H1 (cell line): ENCODE measurements at regions of chr20 and their contacts with region 1.

Region 1: DNA sequence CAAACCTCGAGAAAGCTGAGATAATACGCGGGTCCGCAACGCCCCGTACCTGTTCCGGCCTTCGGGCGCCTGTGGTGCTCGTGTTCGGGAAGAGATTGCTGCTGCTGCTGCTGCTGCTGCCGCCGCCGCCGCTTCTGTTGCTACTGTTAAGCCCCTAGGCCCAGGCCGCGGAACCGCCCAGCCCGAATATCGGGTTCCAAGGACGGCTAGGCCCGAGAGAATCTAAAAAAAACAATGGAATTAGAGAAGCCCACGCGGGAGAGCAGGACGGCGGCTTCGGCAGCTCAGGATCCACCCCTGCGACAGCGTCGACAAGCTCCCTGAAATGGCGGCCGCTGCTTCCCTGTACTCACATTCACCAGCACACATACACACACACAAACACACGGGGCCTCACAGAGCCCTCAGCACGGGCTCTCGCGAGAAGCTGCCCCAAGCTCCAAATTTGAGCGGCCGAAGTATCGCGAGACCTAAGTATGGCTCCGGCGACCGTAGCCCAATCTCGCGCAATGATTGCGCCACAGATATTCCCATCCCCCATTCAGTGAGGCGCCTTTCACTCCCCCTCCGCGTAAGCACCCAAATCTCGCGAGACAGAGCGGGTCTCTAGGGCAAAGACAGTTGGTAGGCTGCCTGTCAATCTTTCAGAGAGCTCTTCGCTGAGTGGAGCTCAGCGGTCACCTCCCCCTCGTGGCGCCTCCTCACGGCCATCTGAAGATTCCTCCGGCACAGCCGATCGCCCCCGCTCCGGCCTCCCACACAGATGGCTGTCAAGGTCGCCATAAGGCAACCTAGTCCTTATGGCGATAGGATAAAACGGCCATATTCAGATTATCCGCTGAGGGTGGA is at the start of gene RBM39:
- DNase-seq: peak; percentile 98 to 100
- H3K4me3 ChIP-seq: peak within 1 kb of the TSS; percentile 83 to 96 (median 90)
- H3K27ac ChIP-seq: peak within 1 kb of the TSS; percentile 98
- H3K4me1 ChIP-seq: peaks cover 0 to 4% (median 4%) of the 10 kb centered on the region in 4 experiments; a peak in 3 of 7 replicates
- H3K27me3 ChIP-seq: no peaks in the 10 kb centered on the region
- CTCF ChIP-seq: peak in 2 of 3 experiments; percentile 24 to 37; a peak in 3 of 4 replicates
- EP300 ChIP-seq: peak in 1 of 2 experiments; percentile 57; a peak in 1 of 3 replicates
- POLR2A ChIP-seq: peak; percentile 97 to 99
- RAD21 ChIP-seq: peak in 1 of 2 experiments; percentile 22; a peak in 1 of 4 replicates
- total RNA-seq, gene RBM39: 219 and 220 TPM in 2 replicates

Region 2: GRCh38 chr20:35454881-35455609 is 287.1 kb before region 1 on chr20 and contains the start of gene CEP250:
- CTCF ChIA-PET with region 1: no interaction called
- POLR2A ChIA-PET with region 1: interaction called, 10 read pairs
- DNase-seq: peak; percentile 96
- H3K4me3 ChIP-seq: peak within 1 kb of the TSS; percentile 79 to 98 (median 90)
- H3K27ac ChIP-seq: peak within 1 kb of the TSS; percentile 98
- H3K4me1 ChIP-seq: peaks cover 2 to 6% (median 5%) of the 10 kb centered on the region in 4 experiments; a peak in 2 of 7 replicates
- H3K27me3 ChIP-seq: no peaks in the 10 kb centered on the region
- CTCF ChIP-seq: no peak
- EP300 ChIP-seq: no peak
- POLR2A ChIP-seq: peak; percentile 65 to 87
- RAD21 ChIP-seq: no peak
- total RNA-seq, gene CEP250: 33.1 and 33.7 TPM in 2 replicates

Region 3: GRCh38 chr20:35582741-35583404 is 159.2 kb before region 1 on chr20:
- CTCF ChIA-PET with region 1: no interaction called
- POLR2A ChIA-PET with region 1: no interaction called
- DNase-seq: no peak
- H3K4me3 ChIP-seq: no peak overlapping the region
- H3K27ac ChIP-seq: no peak overlapping the region
- H3K4me1 ChIP-seq: no peaks in the 10 kb centered on the region
- H3K27me3 ChIP-seq: no peaks in the 10 kb centered on the region
- CTCF ChIP-seq: no peak
- EP300 ChIP-seq: no peak
- POLR2A ChIP-seq: no peak
- RAD21 ChIP-seq: no peak

Region 4: DNA sequence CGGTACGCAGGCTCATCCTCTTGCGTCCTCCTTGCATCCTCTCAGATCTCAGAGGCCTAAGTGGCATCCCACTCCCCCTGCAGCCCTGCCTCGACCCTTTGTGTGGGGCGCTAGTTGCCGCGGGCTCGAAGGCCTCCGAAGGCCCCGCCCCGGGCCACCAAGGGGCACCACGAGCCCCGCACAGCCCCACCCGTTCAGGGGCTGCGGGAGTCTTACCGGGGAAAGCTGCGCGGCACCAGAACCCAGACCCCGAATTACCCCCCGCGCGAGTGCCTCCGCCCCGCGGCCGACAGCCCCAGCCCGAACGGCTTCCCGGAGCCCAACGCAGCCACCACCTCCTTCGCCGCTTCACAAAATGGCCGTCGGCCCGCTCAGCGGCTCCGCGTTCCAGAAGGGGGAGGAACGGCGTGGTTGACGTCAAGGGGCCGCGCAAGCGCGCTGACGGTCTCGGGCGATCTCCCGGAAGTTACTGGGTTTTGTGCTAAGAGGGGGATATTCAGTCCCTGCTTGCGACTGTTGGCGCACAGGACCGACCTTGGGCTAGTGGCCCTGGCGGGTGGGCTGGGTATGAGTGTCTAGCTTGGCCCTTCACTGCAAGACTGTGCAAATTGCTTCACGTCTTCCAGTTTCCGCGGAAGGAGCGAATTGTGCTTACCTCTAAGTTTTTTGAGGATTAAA is 77.4 kb before region 1 on chr20 and contains the starts of genes CPNE1 and RBM12:
- CTCF ChIA-PET with region 1: no interaction called
- POLR2A ChIA-PET with region 1: interaction called, 36 read pairs
- DNase-seq: peak; percentile 84 to 95
- H3K4me3 ChIP-seq: peak within 1 kb of the TSS; percentile 92 to 100 (median 98)
- H3K27ac ChIP-seq: peak within 1 kb of the TSS; percentile 97
- H3K4me1 ChIP-seq: peaks cover 0 to 7% (median 0%) of the 10 kb centered on the region in 4 experiments; a peak in 3 of 7 replicates
- H3K27me3 ChIP-seq: no peaks in the 10 kb centered on the region
- CTCF ChIP-seq: no peak
- EP300 ChIP-seq: peak in 1 of 2 experiments; percentile 22; a peak in 1 of 3 replicates
- POLR2A ChIP-seq: peak; percentile 95 to 96
- RAD21 ChIP-seq: no peak
- total RNA-seq, gene CPNE1: 294 and 299 TPM in 2 replicates
- total RNA-seq, gene RBM12: 175 and 187 TPM in 2 replicates

Region 5: DNA sequence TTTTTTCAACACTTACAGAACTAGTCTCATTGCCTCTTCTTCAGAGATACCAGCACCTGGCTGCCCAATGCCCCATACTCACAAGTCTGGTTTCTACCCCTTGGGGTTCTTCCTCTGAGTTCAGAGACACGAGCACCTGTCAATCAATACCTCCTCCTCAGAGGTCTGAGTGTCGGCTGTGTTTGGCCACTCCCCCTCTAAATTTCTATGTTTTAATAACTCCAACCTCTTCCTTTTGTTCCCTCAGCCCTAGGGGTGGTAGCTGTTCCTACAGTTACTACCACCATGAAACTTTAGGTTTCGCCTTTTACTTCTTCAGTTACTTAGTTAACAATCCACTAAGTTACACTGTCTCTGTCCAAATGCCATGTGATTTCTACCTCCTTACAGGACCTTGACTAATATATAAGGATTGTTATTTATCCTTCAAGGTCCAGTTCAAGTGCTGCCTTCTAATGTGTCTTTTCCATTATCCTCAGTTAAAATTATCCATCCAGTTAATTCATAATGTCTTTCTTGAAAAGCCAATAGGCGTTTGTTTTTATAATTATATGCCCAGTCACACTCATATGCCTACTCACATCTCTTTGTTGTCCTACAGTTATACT is 15.1 kb after region 1 on chr20:
- CTCF ChIA-PET with region 1: interaction called, 5 read pairs
- POLR2A ChIA-PET with region 1: interaction called, 2,341 read pairs
- DNase-seq: no peak
- H3K4me3 ChIP-seq: no peak overlapping the region
- H3K27ac ChIP-seq: no peak overlapping the region
- H3K4me1 ChIP-seq: no peaks in the 10 kb centered on the region
- H3K27me3 ChIP-seq: no peaks in the 10 kb centered on the region
- CTCF ChIP-seq: no peak
- EP300 ChIP-seq: no peak
- POLR2A ChIP-seq: no peak
- RAD21 ChIP-seq: no peak

Region 6: DNA sequence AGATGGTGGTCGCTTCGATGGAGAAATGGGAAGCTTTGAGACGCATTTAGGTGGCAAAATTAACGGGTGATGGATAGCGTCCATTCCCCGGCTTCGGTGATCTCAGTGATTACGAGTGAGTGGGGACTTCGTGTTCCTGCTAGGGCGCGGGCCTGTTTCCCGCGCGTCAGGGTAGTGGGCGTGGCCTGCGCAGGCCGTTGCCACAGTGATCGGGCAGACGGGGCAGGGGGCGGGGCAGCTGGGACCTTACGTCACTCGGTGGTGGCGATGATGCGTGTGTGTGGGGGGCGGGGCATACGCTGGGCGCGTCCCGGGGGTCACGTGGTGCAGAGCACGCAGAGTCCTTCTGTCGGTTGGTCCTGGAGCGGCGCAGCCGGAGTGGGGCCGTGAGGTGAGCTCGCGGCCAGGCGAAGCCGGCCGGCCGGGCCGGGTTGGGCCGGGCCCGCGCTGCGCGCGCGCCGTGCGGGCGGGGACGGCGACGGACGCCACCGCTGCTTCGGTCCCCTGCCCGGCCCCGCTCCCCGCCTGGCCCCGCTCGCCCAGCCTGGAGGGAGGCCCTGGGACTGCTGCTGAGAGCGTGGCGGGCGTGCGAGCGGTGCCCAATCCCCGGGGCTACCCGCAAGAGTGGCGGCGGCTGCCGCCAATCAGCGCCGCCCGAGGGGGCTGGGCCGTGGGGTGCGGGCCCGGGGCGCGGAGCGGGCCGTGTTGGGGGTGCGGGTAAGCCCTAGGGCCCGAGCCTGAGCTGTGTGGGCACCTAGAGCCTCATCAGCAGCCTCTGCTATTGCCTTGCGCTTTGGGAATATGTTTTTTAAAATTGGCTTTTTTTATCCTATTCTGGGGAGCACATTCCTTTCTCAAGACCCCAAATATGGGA is 29.8 kb after region 1 on chr20 and contains the start of gene PHF20:
- CTCF ChIA-PET with region 1: interaction called, 5 read pairs
- POLR2A ChIA-PET with region 1: interaction called, 167 read pairs
- DNase-seq: peak; percentile 92 to 97
- H3K4me3 ChIP-seq: peak within 1 kb of the TSS; percentile 65 to 82 (median 78)
- H3K27ac ChIP-seq: peak within 1 kb of the TSS; percentile 78; the same call in 1 of the 2 replicates
- H3K4me1 ChIP-seq: peaks cover 7 to 16% (median 12%) of the 10 kb centered on the region in 4 experiments
- H3K27me3 ChIP-seq: peaks cover 5 to 9% (median 9%) of the 10 kb centered on the region in 4 experiments
- CTCF ChIP-seq: no peak
- EP300 ChIP-seq: no peak
- POLR2A ChIP-seq: peak in 1 of 2 experiments; percentile 87; a peak in 2 of 3 replicates
- RAD21 ChIP-seq: no peak
- total RNA-seq, gene PHF20: 70.1 and 70.3 TPM in 2 replicates

Region 7: GRCh38 chr20:35823937-35824336 is 81.8 kb after region 1 on chr20:
- CTCF ChIA-PET with region 1: no interaction called
- POLR2A ChIA-PET with region 1: interaction called, 10 read pairs
- DNase-seq: no peak
- H3K4me3 ChIP-seq: no peak overlapping the region
- H3K27ac ChIP-seq: no peak overlapping the region
- H3K4me1 ChIP-seq: no peaks in the 10 kb centered on the region
- H3K27me3 ChIP-seq: no peaks in the 10 kb centered on the region
- CTCF ChIP-seq: no peak
- EP300 ChIP-seq: no peak
- POLR2A ChIP-seq: no peak
- RAD21 ChIP-seq: no peak

Region 8: GRCh38 chr20:35883778-35884540 is 141.8 kb after region 1 on chr20:
- CTCF ChIA-PET with region 1: interaction called, 6 read pairs
- POLR2A ChIA-PET with region 1: interaction called, 139 read pairs
- DNase-seq: peak; percentile 43 to 69
- H3K4me3 ChIP-seq: no peak overlapping the region
- H3K27ac ChIP-seq: no peak overlapping the region
- H3K4me1 ChIP-seq: peaks cover 0 to 3% (median 0%) of the 10 kb centered on the region in 4 experiments; a peak in 1 of 7 replicates
- H3K27me3 ChIP-seq: no peaks in the 10 kb centered on the region
- CTCF ChIP-seq: peak; percentile 73 to 88 (median 78)
- EP300 ChIP-seq: no peak
- POLR2A ChIP-seq: no peak
- RAD21 ChIP-seq: peak; percentile 82 to 86